Left ventricle myocardium inferior (tissue), 1 donor: ENCODE measurements at regions of chr17 and their contacts with region 1.

Region 1: DNA sequence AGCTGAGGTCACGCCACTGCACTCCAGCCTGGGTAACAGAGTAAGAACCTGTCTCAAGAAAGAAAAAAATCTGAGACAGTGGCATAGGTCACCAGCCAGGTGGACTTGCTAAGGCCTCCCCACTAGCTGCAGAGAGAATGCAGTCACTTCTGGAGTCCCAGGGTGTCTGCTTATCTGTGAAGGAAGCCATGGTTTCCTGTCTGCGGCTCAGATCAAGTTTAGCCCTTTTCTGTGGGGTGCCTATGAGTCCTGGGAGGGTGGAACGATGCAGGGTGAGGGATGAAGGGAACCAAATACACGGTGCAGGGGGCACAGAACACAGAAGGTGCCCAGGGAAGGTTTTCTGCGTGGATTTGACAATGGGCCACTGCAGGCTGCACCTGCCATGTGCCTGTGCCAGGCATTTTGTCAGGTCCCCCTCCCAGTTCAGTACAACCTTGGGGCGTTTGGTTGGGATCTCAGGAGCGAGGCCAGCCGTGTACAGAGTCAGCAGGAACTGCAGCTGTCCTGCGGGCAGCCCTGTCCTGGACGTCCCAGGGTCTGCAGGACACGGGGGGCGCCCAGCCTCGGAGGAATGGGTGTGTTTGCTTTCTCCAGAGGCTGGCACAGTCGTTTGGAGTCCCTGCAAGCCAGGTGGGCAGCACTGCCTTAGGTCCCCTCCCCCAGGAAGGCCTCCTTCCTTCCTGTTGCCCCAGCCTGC is 41.8 kb downstream of the RAB11FIP4 start:
- DNase-seq: no peak
- H3K4me3 ChIP-seq: no peak overlapping the region
- H3K27ac ChIP-seq: no peak overlapping the region
- H3K4me1 ChIP-seq: peaks cover 5% of the 10 kb centered on the region
- H3K27me3 ChIP-seq: peaks cover 62% of the 10 kb centered on the region
- CTCF ChIP-seq: no peak

Region 2: GRCh38 chr17:31524926-31525800 is 91.9 kb after region 1 on chr17:
- intact Hi-C with region 1: loop called (anchors 10 kb)
- DNase-seq: peak; percentile 81
- H3K4me3 ChIP-seq: no peak overlapping the region
- H3K27ac ChIP-seq: no peak overlapping the region
- H3K4me1 ChIP-seq: peaks cover 18% of the 10 kb centered on the region
- H3K27me3 ChIP-seq: no peaks in the 10 kb centered on the region
- CTCF ChIP-seq: peak; percentile 89

Region 3: GRCh38 chr17:31842183-31843069 is 409.2 kb after region 1 on chr17:
- intact Hi-C with region 1: loop called (anchors 10 kb)
- DNase-seq: peak; percentile 57
- H3K4me3 ChIP-seq: peak overlapping the region; percentile 52
- H3K27ac ChIP-seq: peak overlapping the region; percentile 67
- H3K4me1 ChIP-seq: peaks cover 28% of the 10 kb centered on the region
- H3K27me3 ChIP-seq: no peaks in the 10 kb centered on the region
- CTCF ChIP-seq: peak; percentile 99